HEK293 (cell line): ENCODE measurements at regions of chr6 and their contacts with region 1.

Region 1: GRCh38 chr6:151765444-151765886 is 42.0 kb upstream of the ESR1 start:
- H3K4me3 ChIP-seq: no peak overlapping the region
- H3K27ac ChIP-seq: no peak overlapping the region
- H3K4me1 ChIP-seq: no peaks in the 10 kb centered on the region
- CTCF ChIP-seq: peak; percentile 11; the same call in 1 of the 2 replicates

Region 2: GRCh38 chr6:151546941-151547659 is 218.4 kb before region 1 on chr6:
- CTCF ChIA-PET with region 1: no interaction called
- POLR2A ChIA-PET with region 1: no interaction called
- H3K4me3 ChIP-seq: no peak overlapping the region
- H3K27ac ChIP-seq: no peak overlapping the region
- H3K4me1 ChIP-seq: no peaks in the 10 kb centered on the region
- CTCF ChIP-seq: no peak

Region 3: GRCh38 chr6:151702851-151703611 is 62.4 kb before region 1 on chr6:
- CTCF ChIA-PET with region 1: no interaction called
- POLR2A ChIA-PET with region 1: no interaction called
- H3K4me3 ChIP-seq: no peak overlapping the region
- H3K27ac ChIP-seq: no peak overlapping the region
- H3K4me1 ChIP-seq: no peaks in the 10 kb centered on the region
- CTCF ChIP-seq: no peak

Region 4: DNA sequence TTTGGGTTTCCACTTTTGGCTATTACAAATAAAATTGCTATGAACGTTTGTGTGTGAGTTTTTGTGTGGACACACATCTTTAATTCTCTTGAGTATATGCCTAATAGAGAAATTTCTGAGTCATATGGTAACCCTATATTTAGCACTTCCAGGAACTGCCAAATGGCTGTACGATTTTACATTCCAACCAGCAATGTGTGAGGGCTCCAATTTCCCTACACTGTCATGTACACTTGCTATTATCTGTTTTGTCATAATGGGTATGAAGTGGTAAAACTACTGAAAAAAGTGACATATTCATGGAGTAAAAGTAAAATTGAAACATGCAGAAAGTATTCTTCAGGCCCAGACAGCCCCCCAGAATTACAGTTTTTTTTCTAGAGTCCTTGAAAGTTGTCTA is 17.6 kb before region 1 on chr6:
- CTCF ChIA-PET with region 1: interaction called, 14 read pairs
- POLR2A ChIA-PET with region 1: no interaction called
- H3K4me3 ChIP-seq: no peak overlapping the region
- H3K27ac ChIP-seq: no peak overlapping the region
- H3K4me1 ChIP-seq: no peaks in the 10 kb centered on the region
- CTCF ChIP-seq: no peak

Region 5: DNA sequence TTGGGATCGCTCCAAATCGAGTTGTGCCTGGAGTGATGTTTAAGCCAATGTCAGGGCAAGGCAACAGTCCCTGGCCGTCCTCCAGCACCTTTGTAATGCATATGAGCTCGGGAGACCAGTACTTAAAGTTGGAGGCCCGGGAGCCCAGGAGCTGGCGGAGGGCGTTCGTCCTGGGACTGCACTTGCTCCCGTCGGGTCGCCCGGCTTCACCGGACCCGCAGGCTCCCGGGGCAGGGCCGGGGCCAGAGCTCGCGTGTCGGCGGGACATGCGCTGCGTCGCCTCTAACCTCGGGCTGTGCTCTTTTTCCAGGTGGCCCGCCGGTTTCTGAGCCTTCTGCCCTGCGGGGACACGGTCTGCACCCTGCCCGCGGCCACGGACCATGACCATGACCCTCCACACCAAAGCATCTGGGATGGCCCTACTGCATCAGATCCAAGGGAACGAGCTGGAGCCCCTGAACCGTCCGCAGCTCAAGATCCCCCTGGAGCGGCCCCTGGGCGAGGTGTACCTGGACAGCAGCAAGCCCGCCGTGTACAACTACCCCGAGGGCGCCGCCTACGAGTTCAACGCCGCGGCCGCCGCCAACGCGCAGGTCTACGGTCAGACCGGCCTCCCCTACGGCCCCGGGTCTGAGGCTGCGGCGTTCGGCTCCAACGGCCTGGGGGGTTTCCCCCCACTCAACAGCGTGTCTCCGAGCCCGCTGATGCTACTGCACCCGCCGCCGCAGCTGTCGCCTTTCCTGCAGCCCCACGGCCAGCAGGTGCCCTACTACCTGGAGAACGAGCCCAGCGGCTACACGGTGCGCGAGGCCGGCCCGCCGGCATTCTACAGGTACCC is 42.3 kb after region 1 on chr6 and contains the start of gene ESR1:
- CTCF ChIA-PET with region 1: interaction called, 10 read pairs
- POLR2A ChIA-PET with region 1: no interaction called
- H3K4me3 ChIP-seq: peak within 1 kb of the TSS; percentile 52
- H3K27ac ChIP-seq: peak within 1 kb of the TSS; percentile 47; the same call in 1 of the 2 replicates
- H3K4me1 ChIP-seq: peaks cover 11% of the 10 kb centered on the region
- CTCF ChIP-seq: no peak

Region 6: GRCh38 chr6:151958331-151958730 is 192.9 kb after region 1 on chr6:
- CTCF ChIA-PET with region 1: no interaction called
- POLR2A ChIA-PET with region 1: no interaction called
- H3K4me3 ChIP-seq: no peak overlapping the region
- H3K27ac ChIP-seq: no peak overlapping the region
- H3K4me1 ChIP-seq: no peaks in the 10 kb centered on the region
- CTCF ChIP-seq: no peak

Region 7: GRCh38 chr6:152124429-152125074 is 359.1 kb after region 1 on chr6:
- CTCF ChIA-PET with region 1: interaction called, 62 read pairs
- POLR2A ChIA-PET with region 1: no interaction called
- H3K4me3 ChIP-seq: no peak overlapping the region
- H3K27ac ChIP-seq: no peak overlapping the region
- H3K4me1 ChIP-seq: no peaks in the 10 kb centered on the region
- CTCF ChIP-seq: peak; percentile 22; the same call in 1 of the 2 replicates

Region 8: GRCh38 chr6:152503546-152503945 is 738.1 kb after region 1 on chr6:
- CTCF ChIA-PET with region 1: no interaction called
- POLR2A ChIA-PET with region 1: no interaction called
- H3K4me3 ChIP-seq: no peak overlapping the region
- H3K27ac ChIP-seq: no peak overlapping the region
- H3K4me1 ChIP-seq: no peaks in the 10 kb centered on the region
- CTCF ChIP-seq: no peak